Aorta (tissue), 5 donors: ENCODE measurements at regions of chr19 and their contacts with region 1.

Region 1: DNA sequence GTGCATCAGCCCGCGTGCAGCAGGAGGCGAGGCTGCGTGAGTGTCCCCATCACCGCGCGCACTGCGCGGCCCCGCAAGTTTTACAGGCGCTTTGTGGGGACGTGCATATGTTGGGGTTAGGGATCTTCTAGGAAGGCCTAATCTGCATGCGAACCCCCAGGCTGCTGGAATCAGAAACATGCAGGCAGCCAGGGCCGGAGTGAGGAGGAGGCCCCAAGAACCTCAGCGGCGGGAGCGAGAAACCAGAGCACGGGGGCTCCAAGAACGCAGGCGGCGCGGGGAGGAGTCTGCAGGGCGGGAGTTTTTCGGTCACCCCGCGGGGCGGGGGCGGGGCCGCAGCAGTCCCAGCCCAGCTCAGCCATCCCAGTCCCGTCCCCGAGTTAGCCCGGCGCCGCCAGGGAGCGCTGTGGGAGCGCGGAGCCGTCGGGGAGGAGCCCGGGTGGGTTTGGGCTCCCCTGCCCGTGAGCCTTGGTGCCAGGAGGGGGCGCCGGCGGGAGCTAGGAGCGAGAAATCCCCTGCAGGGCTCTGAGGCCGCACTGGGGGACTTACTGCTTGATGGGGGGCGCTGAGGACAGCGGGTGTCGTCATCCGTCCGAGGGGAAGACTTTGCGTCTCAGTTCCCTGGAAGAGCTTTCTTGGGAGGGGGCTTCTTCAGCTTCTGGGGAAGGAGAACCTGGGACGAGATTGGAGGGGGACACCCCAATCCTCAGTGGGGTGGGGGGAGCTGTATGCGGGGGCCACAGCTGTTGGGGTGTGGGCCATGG is 933 bp upstream of the NRTN start:
- DNase-seq: peak; percentile 85 to 93
- ATAC-seq: peak; percentile 81
- H3K4me3 ChIP-seq: no peak overlapping the region
- H3K27ac ChIP-seq: no peak overlapping the region
- H3K4me1 ChIP-seq: no peaks in the 10 kb centered on the region
- H3K27me3 ChIP-seq: no peaks in the 10 kb centered on the region

Region 2: DNA sequence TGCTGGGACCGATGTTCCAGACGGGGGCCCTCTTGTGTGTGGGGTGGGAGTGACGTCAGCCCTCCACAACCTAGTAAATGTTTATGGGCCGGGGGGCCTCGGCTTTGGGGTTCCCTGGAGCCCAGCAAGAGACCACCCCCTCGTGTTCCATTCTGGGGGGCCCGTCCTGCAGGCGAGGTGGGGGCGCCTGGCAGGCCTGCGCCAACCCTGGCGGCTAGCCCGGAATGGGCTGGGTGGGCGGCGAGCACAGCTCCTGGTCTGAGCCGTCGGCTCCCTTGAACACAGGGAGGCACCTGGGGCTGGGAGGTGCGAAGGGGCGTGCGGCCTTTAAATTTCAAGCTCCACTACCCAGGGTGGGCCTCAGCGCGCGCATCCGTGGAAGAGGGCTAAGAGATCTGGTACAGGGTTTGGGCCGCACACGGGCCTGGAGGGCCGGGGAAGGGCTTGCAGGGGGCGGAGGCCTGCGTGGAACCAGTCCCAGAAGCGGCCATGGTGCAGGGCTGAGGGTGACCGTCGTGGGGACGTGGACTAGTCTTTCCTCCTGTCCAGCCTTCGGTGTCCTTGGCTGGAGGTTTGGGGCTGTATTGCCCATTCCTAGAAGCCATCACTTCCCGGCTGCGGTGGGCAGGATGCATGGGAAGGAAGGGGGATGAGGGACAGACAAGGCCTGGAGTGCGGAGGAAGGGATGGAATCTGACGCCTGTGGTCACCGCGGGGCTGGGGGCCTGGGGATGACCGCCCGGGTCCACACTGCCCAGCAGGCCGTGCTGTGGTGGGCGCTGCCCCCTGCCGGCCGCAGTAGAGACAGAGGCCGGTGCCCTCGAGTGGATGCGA is 88.2 kb after region 1 on chr19:
- intact Hi-C with region 1: loop called in 1 of 2 experiments (anchors 10 kb)
- DNase-seq: no peak
- ATAC-seq: peak; percentile 51
- H3K4me3 ChIP-seq: no peak overlapping the region
- H3K27ac ChIP-seq: no peak overlapping the region
- H3K4me1 ChIP-seq: no peaks in the 10 kb centered on the region
- H3K27me3 ChIP-seq: no peaks in the 10 kb centered on the region

Region 3: GRCh38 chr19:6021878-6022569 is 218.1 kb after region 1 on chr19:
- intact Hi-C with region 1: loop called in 1 of 2 experiments (anchors 10 kb)
- DNase-seq: peak; percentile 80 to 87
- ATAC-seq: peak; percentile 79
- H3K4me3 ChIP-seq: no peak overlapping the region
- H3K27ac ChIP-seq: no peak overlapping the region
- H3K4me1 ChIP-seq: no peaks in the 10 kb centered on the region
- H3K27me3 ChIP-seq: no peaks in the 10 kb centered on the region